ENCODE measurements at regions of chr9 and their contacts with region 1.

Region 1: DNA sequence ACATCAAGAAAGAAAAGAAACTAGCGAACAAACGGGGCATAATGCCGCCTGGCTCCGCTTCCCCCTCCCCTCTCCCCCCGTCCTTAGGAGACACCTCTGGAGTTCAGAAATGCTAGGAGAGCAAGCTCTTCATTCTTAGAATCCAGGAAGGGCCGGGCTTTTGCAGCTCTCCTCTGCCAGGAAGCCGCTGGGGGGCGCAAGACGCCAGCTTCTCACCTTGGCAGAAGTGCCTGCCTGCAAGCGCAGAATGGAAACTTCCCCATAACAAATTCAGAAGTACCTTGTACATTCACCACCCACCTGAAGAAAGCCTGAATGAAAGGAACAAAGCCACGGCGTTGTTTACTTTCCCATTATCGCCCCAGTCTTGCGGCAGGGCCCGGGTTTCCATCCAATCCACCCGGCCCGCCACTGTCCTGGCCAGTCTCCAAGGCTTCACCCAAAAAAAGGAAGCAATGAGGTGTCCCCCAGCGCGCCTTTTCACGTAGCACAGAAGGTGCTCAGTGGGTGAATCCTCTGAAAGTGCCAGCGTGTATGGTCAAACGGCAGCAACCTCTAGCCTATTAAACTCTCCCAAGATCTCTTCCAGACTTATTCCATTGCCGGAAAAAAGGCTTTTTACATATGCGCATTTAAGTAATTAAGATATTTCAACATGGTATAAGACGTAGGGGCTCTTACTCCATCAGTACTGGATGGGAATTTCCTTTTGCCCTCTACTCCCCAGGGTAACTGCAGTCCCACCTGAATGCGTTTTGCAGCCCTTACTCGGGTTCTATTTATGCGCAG is 1.6 kb upstream of the GADD45G start:
- DNase-seq: peak; percentile 88
- H3K4me3 Mint-ChIP-seq: peak overlapping the region; percentile 82
- H3K27ac Mint-ChIP-seq: no peak overlapping the region
- H3K4me1 Mint-ChIP-seq: peaks cover 13% of the 10 kb centered on the region
- H3K27me3 Mint-ChIP-seq: no peaks in the 10 kb centered on the region
- CTCF ChIP-seq: peak; percentile 59

Region 2: GRCh38 chr9:89732295-89732938 is 129.2 kb after region 1 on chr9:
- CTCF ChIA-PET with region 1: no interaction called
- intact Hi-C with region 1: loop called (anchors 10 kb)
- DNase-seq: no peak
- H3K4me3 Mint-ChIP-seq: no peak overlapping the region
- H3K27ac Mint-ChIP-seq: no peak overlapping the region
- H3K4me1 Mint-ChIP-seq: no peaks in the 10 kb centered on the region
- H3K27me3 Mint-ChIP-seq: peaks cover 23% of the 10 kb centered on the region
- CTCF ChIP-seq: no peak

Region 3: GRCh38 chr9:89929673-89930480 is 326.7 kb after region 1 on chr9:
- CTCF ChIA-PET with region 1: interaction called, 7 read pairs
- intact Hi-C with region 1: loop called (anchors 10 kb)
- DNase-seq: no peak
- H3K4me3 Mint-ChIP-seq: no peak overlapping the region
- H3K27ac Mint-ChIP-seq: no peak overlapping the region
- H3K4me1 Mint-ChIP-seq: no peaks in the 10 kb centered on the region
- H3K27me3 Mint-ChIP-seq: peaks cover 88% of the 10 kb centered on the region
- CTCF ChIP-seq: no peak

Region 4: GRCh38 chr9:89996773-89997172 is 393.6 kb after region 1 on chr9:
- CTCF ChIA-PET with region 1: interaction called, 7 read pairs
- intact Hi-C with region 1: loop called (anchors 1 kb)
- DNase-seq: peak; percentile 4
- H3K4me3 Mint-ChIP-seq: no peak overlapping the region
- H3K27ac Mint-ChIP-seq: no peak overlapping the region
- H3K4me1 Mint-ChIP-seq: no peaks in the 10 kb centered on the region
- H3K27me3 Mint-ChIP-seq: peaks cover 1% of the 10 kb centered on the region
- CTCF ChIP-seq: no peak

Region 5: GRCh38 chr9:90102292-90102901 is 499.2 kb after region 1 on chr9:
- CTCF ChIA-PET with region 1: interaction called, 30 read pairs
- intact Hi-C with region 1: loop called (anchors 1 kb)
- DNase-seq: peak; percentile 76
- H3K4me3 Mint-ChIP-seq: no peak overlapping the region
- H3K27ac Mint-ChIP-seq: no peak overlapping the region
- H3K4me1 Mint-ChIP-seq: peaks cover under 1% of the 10 kb centered on the region
- H3K27me3 Mint-ChIP-seq: no peaks in the 10 kb centered on the region
- CTCF ChIP-seq: peak; percentile 46